ENCODE measurements at regions of chr13 and their contacts with region 1.

Region 1: GRCh38 chr13:78609464-78610205 is 6.3 kb upstream of the POU4F1 start:
- DNase-seq: peak in 1 of 2 experiments; percentile 72
- H3K4me3 ChIP-seq: peak overlapping the region; percentile 35 to 63 (median 42); a peak in 7 of 8 replicates
- H3K27ac ChIP-seq: no peak overlapping the region
- H3K4me1 ChIP-seq: peaks cover 7 to 33% (median 14%) of the 10 kb centered on the region in 4 experiments
- H3K27me3 ChIP-seq: peaks cover 55 to 69% (median 67%) of the 10 kb centered on the region in 4 experiments
- CTCF ChIP-seq: no peak
- EP300 ChIP-seq: no peak
- POLR2A ChIP-seq: no peak
- RAD21 ChIP-seq: 0 out of 4 replicates have a peak, but pooled peaks of 1 of the 2 experiments have one; percentile 1

Region 2: GRCh38 chr13:78595495-78596398 is 13.9 kb before region 1 on chr13:
- CTCF ChIA-PET with region 1: interaction called, 15 read pairs
- POLR2A ChIA-PET with region 1: interaction called, 32 read pairs
- DNase-seq: peak in 1 of 2 experiments; percentile 85
- H3K4me3 ChIP-seq: peak overlapping the region; percentile 30 to 63 (median 56)
- H3K27ac ChIP-seq: no peak overlapping the region
- H3K4me1 ChIP-seq: peaks cover 6 to 19% (median 8%) of the 10 kb centered on the region in 4 experiments
- H3K27me3 ChIP-seq: peaks cover 61 to 91% (median 80%) of the 10 kb centered on the region in 4 experiments
- CTCF ChIP-seq: no peak
- EP300 ChIP-seq: no peak
- POLR2A ChIP-seq: no peak
- RAD21 ChIP-seq: no peak